ENCODE measurements at regions of chr15 and their contacts with region 1.

Region 1: DNA sequence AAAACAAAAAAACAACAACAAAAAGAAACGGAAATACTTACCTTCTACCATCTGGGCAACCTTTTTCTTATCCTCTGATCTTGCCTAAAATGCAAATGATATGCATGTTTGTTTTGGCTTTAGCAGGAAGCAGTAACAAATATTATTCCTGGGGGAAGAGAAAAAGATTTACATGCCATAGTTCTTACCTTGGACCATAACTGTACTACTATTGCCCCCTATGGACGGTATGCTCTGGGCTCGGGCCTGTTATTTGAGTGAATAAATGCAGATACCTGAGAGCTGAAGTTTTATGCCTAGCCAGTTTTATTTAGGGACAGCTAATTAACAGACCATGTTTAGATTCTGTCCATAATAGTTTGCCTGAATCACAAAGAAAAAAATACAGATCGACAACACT is 12.6 kb upstream of the STARD5 start:
- DNase-seq: no peak
- H3K4me3 ChIP-seq: no peak overlapping the region
- CTCF ChIP-seq: no peak
- POLR2A ChIP-seq: no peak

Region 2: GRCh38 chr15:80418892-80419537 is 917.6 kb before region 1 on chr15:
- intact Hi-C with region 1: no loop called
- DNase-seq: no peak
- H3K4me3 ChIP-seq: no peak overlapping the region
- CTCF ChIP-seq: no peak
- POLR2A ChIP-seq: no peak

Region 3: GRCh38 chr15:81449836-81450495 is 113.4 kb after region 1 on chr15:
- intact Hi-C with region 1: no loop called
- DNase-seq: no peak
- H3K4me3 ChIP-seq: no peak overlapping the region
- CTCF ChIP-seq: no peak
- POLR2A ChIP-seq: no peak

Region 4: GRCh38 chr15:81575436-81576123 is 239.0 kb after region 1 on chr15:
- intact Hi-C with region 1: loop called (anchors 5 kb)
- DNase-seq: no peak
- H3K4me3 ChIP-seq: no peak overlapping the region
- CTCF ChIP-seq: no peak
- POLR2A ChIP-seq: no peak